ENCODE measurements at regions of chr2 and their contacts with region 1.

Region 1: GRCh38 chr2:221517696-221518151 is 54.4 kb downstream of the EPHA4 start:
- DNase-seq: peak; percentile 93
- H3K4me3 Mint-ChIP-seq: no peak overlapping the region
- H3K27ac Mint-ChIP-seq: no peak overlapping the region
- H3K4me1 Mint-ChIP-seq: no peaks in the 10 kb centered on the region
- H3K27me3 Mint-ChIP-seq: no peaks in the 10 kb centered on the region

Region 2: GRCh38 chr2:221502270-221503010 is 15.3 kb before region 1 on chr2:
- intact Hi-C with region 1: loop called (anchors 1 kb)
- DNase-seq: no peak
- H3K4me3 Mint-ChIP-seq: no peak overlapping the region
- H3K27ac Mint-ChIP-seq: no peak overlapping the region
- H3K4me1 Mint-ChIP-seq: peaks cover 6% of the 10 kb centered on the region
- H3K27me3 Mint-ChIP-seq: peaks cover 3% of the 10 kb centered on the region

Region 3: DNA sequence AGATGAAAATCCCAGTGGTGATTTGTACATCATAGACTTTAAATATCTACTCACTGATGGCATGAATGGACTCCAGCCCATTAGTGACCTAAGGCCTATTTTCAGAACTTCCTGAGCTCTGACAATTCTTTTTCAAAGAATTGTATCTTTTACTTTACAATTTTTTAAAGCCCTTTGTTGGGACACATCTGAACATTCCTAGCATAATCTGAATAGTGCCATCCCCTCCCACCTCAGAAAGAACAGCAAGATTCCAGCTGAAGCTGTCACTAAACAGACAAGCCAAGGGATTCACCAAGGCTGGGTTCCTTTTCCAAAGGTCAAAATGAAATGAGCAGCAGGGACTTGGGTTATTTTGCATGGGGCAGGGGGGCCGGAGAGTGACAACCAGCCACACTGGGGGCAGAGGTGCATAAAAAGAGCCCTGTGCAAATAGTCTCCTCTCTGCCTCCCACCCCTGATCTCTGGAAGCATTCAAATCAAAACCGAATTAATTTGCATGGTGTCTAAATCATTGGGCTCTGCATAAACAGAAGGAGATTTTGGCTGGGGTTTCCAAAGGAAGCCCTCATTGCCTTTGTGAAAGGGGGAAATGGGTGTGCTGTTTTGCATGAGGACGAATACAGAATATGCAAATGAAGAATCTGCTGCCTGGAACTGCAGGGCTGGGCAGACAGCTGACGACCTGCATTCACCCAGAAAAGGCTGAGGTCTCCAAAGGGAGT is 37.2 kb after region 1 on chr2:
- intact Hi-C with region 1: loop called (anchors 5 kb)
- DNase-seq: peak; percentile 55
- H3K4me3 Mint-ChIP-seq: peak overlapping the region; percentile 50
- H3K27ac Mint-ChIP-seq: peak overlapping the region; percentile 34
- H3K4me1 Mint-ChIP-seq: peaks cover 9% of the 10 kb centered on the region
- H3K27me3 Mint-ChIP-seq: peaks cover 10% of the 10 kb centered on the region

Region 4: DNA sequence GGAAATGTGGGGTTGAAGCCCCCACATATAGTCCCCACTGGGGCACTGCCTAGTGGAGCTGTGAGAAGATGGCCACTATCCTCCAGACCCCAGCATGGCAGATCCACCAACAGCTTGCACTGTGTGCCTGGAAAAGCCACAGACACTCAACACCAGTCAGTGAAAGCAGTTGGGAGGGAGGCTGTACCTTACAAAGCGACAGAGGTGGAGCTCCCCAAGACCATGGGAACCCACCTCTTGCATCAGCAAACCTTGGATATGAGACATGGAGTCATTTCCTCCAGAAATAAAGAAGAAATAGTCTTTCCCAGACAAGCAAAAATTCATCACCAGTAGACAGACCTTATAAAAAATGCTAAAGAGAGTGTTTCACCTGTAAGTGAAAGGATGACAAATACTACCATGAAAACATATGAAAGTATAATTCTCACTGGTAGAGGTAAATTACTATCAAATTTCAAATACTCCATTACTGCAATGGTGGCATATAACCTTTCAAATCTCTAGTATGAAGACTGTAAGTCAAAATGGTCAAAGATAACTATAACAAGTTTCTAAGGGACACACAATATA is 207.0 kb after region 1 on chr2:
- intact Hi-C with region 1: loop called (anchors 10 kb)
- DNase-seq: peak; percentile 57
- H3K4me3 Mint-ChIP-seq: no peak overlapping the region
- H3K27ac Mint-ChIP-seq: no peak overlapping the region
- H3K4me1 Mint-ChIP-seq: no peaks in the 10 kb centered on the region
- H3K27me3 Mint-ChIP-seq: no peaks in the 10 kb centered on the region